ENCODE measurements at regions of chr11 and their contacts with region 1.

Region 1: DNA sequence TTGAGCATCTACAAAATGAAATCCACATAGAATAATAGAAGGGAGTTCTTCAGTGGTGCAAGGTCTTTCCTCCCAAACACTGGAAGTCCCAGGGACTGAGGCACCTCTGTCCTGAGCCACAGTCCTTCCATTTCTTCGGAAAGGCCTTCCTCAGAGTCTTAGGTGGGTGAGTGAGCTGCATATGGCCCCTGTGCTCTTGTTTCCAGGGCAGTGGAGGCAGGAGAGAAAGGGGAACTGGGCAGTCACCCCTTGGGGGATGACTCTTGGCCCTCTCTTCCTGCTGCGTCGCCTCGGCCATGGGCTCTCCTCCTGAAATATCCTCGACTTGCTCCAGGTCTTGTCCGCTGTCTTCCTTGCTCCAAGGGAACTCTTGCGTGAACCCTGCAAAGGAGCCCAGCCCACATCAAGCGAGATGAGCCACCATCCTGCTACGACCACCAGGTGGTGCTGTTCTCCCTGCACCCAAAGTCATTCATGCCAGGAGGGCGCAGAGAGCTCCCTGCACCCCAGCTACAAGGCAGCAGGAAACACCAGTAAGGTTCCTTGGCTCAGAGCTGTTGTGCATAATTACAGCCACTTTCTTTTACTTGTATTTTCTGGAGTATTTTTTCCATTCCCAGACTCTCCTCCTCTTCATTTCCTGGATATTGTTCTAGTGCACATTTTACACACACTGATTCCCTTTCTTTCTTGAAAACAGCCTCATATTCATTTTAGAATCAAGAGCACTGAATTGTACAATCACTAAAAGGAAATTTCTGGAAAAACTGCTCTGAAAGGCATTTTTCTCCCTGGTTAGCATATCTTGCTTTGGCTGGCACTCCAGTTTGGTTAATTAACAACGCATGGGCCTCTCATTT is 397.8 kb downstream of the OPCML start:
- DNase-seq: peak; percentile 32 to 60
- ATAC-seq: peak in 2 of 4 donors; percentile 53 to 58
- H3K4me3 ChIP-seq: no peak overlapping the region
- H3K27ac ChIP-seq: no peak overlapping the region
- H3K4me1 ChIP-seq: no peaks in the 10 kb centered on the region
- H3K27me3 ChIP-seq: peaks cover 0 to 5% (median 0%) of the 10 kb centered on the region in 3 donors
- CTCF ChIP-seq: peak; percentile 68

Region 2: GRCh38 chr11:132803436-132803835 is 331.1 kb before region 1 on chr11:
- intact Hi-C with region 1: no loop called
- DNase-seq: no peak
- ATAC-seq: no peak
- H3K4me3 ChIP-seq: no peak overlapping the region
- H3K27ac ChIP-seq: no peak overlapping the region
- H3K4me1 ChIP-seq: no peaks in the 10 kb centered on the region
- H3K27me3 ChIP-seq: no peaks in the 10 kb centered on the region
- CTCF ChIP-seq: no peak

Region 3: GRCh38 chr11:133122256-133122655 is 12.3 kb before region 1 on chr11:
- intact Hi-C with region 1: loop called in 1 of 2 experiments (anchors 1 kb)
- DNase-seq: no peak
- ATAC-seq: no peak
- H3K4me3 ChIP-seq: no peak overlapping the region
- H3K27ac ChIP-seq: no peak overlapping the region
- H3K4me1 ChIP-seq: no peaks in the 10 kb centered on the region
- H3K27me3 ChIP-seq: peaks cover 0 to 7% (median 0%) of the 10 kb centered on the region in 3 donors
- CTCF ChIP-seq: no peak

Region 4: GRCh38 chr11:133821776-133822175 is 687.2 kb after region 1 on chr11:
- intact Hi-C with region 1: loop called in 1 of 2 experiments (anchors 5 kb)
- DNase-seq: no peak
- ATAC-seq: peak in 2 of 4 donors; percentile 54 to 58
- H3K4me3 ChIP-seq: no peak overlapping the region
- H3K27ac ChIP-seq: no peak overlapping the region
- H3K4me1 ChIP-seq: no peaks in the 10 kb centered on the region
- H3K27me3 ChIP-seq: no peaks in the 10 kb centered on the region
- CTCF ChIP-seq: peak; percentile 51

Region 5: DNA sequence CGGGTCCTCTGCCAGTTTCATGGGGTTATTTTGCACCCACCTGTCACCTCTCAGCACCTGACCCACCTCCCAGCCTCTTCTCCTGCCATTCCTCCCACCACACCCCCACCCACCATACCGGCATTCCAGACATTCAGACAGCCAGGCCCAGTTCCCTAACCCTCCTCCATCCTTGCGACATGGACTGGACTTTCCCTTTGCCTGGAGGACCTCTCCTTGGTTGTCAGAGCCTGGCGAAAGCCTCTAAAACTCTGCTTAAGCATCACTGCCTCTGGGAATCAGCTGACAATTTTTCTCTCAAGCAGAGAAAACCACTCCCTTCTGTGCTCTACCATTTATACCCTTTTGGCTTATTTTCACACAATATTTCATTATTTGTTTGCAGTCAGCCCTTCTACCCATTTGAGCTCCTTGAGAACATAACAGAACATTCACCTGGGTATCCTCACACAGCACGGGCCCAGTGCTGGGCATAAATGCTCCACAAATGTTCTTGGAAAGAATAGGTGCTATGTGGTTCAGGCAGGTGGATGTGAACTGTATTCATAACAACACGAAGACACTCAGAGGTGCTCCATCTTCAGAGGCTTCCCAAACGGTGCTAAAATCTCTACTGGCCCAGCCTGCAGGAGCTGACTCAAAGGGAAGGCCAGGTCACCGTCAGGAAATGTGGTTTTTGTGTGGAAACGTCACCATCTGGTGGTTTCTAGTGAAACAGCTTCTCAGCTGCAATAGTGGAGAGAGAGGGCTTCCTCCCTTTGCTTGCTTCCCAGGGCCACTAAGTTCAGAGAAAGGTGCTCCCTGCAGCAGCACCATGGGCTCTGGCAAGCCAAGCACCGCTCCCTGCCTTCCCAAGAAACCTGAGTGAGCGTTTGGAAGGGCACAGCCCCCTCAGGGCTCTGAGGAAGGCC is 700.4 kb after region 1 on chr11:
- intact Hi-C with region 1: loop called (anchors 2 to 5 kb)
- DNase-seq: no peak
- ATAC-seq: peak; percentile 61 to 76 (median 66)
- H3K4me3 ChIP-seq: no peak overlapping the region
- H3K27ac ChIP-seq: no peak overlapping the region
- H3K4me1 ChIP-seq: no peaks in the 10 kb centered on the region
- H3K27me3 ChIP-seq: peaks cover 0 to 3% (median 0%) of the 10 kb centered on the region in 3 donors
- CTCF ChIP-seq: peak; percentile 60